ENCODE measurements at regions of chr10 and their contacts with region 1.

Region 1: GRCh38 chr10:69092959-69093850 is 5.3 kb downstream of the SRGN start:
- DNase-seq: peak; percentile 74 to 93 (median 80)
- ATAC-seq: peak; percentile 67
- H3K4me3 ChIP-seq: no peak overlapping the region
- H3K27ac ChIP-seq: peak overlapping the region; percentile 2; the same call in 1 of the 3 replicates
- H3K4me1 ChIP-seq: peaks cover 0 to 17% of the 10 kb centered on the region in 2 experiments; a peak in 2 of 5 replicates
- H3K27me3 ChIP-seq: no peaks in the 10 kb centered on the region
- CTCF ChIP-seq: peak; percentile 70 to 92 (median 80)
- EP300 ChIP-seq: no peak
- POLR2A ChIP-seq: no peak
- RAD21 ChIP-seq: peak; percentile 96 to 98

Region 2: GRCh38 chr10:68988530-68989316 is 104.5 kb before region 1 on chr10 and contains the start of gene KIFBP:
- CTCF ChIA-PET with region 1: interaction called, 4 read pairs
- POLR2A ChIA-PET with region 1: interaction called, 6 read pairs
- in situ Hi-C with region 1: no loop called
- intact Hi-C with region 1: loop called (anchors 1 kb)
- DNase-seq: peak; percentile 98 to 99 (median 99)
- ATAC-seq: peak; percentile 91
- H3K4me3 ChIP-seq: peak within 1 kb of the TSS; percentile 77
- H3K27ac ChIP-seq: peak within 1 kb of the TSS; percentile 65
- H3K4me1 ChIP-seq: peaks cover 5 to 18% of the 10 kb centered on the region in 2 experiments; a peak in 3 of 5 replicates
- H3K27me3 ChIP-seq: no peaks in the 10 kb centered on the region
- CTCF ChIP-seq: peak; percentile 85 to 97 (median 94)
- EP300 ChIP-seq: peak; percentile 48
- POLR2A ChIP-seq: peak; percentile 89
- RAD21 ChIP-seq: peak; percentile 47 to 65; a peak in 3 of 4 replicates
- polyA plus RNA-seq, gene KIFBP: 5.6 to 8.8 TPM

Region 3: DNA sequence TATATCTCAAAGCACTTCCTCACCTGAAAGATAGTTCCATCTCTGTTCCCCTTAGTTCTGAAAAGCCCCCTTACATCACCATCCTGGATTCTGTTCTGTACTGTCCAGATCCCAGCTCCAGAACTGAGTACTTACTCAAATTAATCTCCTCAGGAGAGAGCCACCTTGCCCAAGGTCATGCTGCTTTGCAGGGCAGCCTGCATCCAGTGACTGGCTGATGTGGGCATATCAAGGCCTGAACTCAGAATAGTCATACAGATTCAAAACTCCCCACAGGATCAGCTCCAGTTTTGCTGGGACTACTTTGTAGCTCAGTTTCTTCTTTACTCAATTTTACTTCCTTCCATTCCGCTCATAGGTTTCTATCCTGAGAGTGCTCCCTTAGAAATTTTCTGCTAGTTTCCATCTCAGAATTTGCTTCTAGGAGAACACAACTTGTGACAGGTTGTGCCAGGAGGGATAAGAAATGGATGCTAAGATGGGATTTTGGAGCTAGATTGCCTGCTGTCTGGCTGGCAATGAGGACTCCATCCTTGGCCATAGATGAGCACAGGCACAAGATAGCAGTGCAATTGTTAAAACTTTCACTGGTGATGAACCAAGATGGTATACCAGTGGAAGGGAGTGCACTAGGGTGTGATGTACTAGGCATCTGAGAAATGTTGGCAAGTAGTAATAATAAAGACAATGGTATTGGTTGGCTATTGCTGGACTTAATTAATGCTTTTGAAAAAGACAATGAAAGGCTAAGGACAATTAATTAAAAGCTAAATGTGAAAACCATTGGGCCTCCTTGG is 12.0 kb after region 1 on chr10:
- CTCF ChIA-PET with region 1: no interaction called
- POLR2A ChIA-PET with region 1: interaction called, 12 read pairs
- in situ Hi-C with region 1: no loop called
- intact Hi-C with region 1: no loop called
- DNase-seq: no peak
- ATAC-seq: peak; percentile 52
- H3K4me3 ChIP-seq: no peak overlapping the region
- H3K27ac ChIP-seq: no peak overlapping the region
- H3K4me1 ChIP-seq: peaks cover 0 to 4% of the 10 kb centered on the region in 2 experiments; a peak in 2 of 5 replicates
- H3K27me3 ChIP-seq: no peaks in the 10 kb centered on the region
- CTCF ChIP-seq: no peak
- EP300 ChIP-seq: no peak
- POLR2A ChIP-seq: no peak; the same call in none of the 2 replicates
- RAD21 ChIP-seq: no peak

Region 4: DNA sequence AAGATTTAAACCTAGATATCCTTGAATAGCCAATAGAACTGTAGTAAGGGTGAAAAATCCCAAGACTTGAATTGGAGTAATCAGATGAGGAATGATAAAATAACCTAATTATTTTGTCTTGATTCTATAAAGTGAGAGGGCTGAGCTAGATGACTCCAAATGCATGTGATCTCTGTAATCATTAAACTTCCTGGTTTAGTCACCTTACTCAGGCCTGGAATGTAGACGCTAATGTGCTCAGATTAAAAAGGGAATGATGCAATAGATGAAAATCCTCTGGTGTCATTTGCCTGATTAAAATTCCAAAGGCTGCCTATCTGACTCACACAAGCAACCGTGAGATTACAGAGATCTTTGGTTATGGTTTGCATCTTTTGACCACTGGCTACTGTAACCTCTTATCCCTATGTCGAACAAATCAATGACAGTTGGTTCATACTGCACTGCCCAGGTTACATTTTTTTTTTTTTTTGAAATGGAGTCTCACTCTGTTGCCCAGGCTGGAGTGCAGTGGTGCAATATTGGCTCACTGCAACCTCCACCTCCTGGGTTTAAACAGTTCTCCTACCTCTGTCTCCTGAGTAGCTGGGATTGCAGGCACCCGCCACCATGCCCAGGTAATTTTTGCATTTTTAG is 124.0 kb after region 1 on chr10:
- CTCF ChIA-PET with region 1: interaction called, 5 read pairs
- POLR2A ChIA-PET with region 1: interaction called, 3 read pairs
- in situ Hi-C with region 1: no loop called
- intact Hi-C with region 1: loop called (anchors 1 kb)
- DNase-seq: peak in 1 of 4 experiments; percentile 53
- ATAC-seq: peak; percentile 65
- H3K4me3 ChIP-seq: no peak overlapping the region
- H3K27ac ChIP-seq: no peak overlapping the region; the same call in 2 of the 3 replicates
- H3K4me1 ChIP-seq: peaks cover 6 to 39% of the 10 kb centered on the region in 2 experiments
- H3K27me3 ChIP-seq: no peaks in the 10 kb centered on the region
- CTCF ChIP-seq: no peak
- EP300 ChIP-seq: peak; percentile 94
- POLR2A ChIP-seq: no peak
- RAD21 ChIP-seq: peak in 1 of 2 experiments; percentile 27; a peak in 2 of 4 replicates

Region 5: GRCh38 chr10:69408318-69409175 is 315.3 kb after region 1 on chr10:
- CTCF ChIA-PET with region 1: interaction called, 4 read pairs
- POLR2A ChIA-PET with region 1: no interaction called
- in situ Hi-C with region 1: no loop called
- intact Hi-C with region 1: loop called (anchors 5 kb)
- DNase-seq: peak; percentile 96 to 99 (median 98)
- ATAC-seq: peak; percentile 91
- H3K4me3 ChIP-seq: peak overlapping the region; percentile 14; the same call in 1 of the 2 replicates
- H3K27ac ChIP-seq: peak overlapping the region; percentile 69; the same call in 2 of the 3 replicates
- H3K4me1 ChIP-seq: peaks cover 24 to 25% of the 10 kb centered on the region in 2 experiments
- H3K27me3 ChIP-seq: peaks cover 0 to under 1% of the 10 kb centered on the region in 2 experiments; a peak in 1 of 5 replicates
- CTCF ChIP-seq: peak; percentile 50 to 73 (median 68)
- EP300 ChIP-seq: no peak
- POLR2A ChIP-seq: peak; percentile 66
- RAD21 ChIP-seq: peak in 1 of 2 experiments; percentile 43; a peak in 2 of 4 replicates

Region 6: DNA sequence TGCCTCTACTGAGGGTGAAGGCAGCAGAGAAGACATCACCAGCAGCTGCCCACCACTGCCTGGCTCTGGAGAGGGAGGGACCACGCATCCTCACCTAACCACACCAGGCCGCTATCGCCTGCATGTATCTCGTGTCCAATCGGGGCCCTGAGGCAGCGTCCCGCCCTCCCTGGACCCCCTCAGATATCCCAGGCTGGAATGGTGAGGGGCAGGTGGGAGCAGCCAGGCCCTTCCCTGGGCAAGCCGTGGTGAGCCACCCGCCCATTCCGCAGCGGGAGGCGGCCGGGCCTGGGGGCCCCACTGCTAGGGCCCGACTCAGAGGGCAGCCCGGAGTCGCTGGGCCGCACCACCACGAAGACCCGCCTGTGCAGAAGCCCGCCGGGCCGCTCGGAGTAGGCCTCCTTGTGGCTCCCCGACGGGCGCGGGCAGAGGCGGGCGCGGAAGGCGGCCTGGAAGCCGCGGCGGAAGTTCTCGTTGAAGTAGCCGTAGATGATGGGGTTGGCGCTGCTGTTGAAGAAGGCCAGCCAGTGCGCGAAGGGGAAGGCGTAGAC is 1161.6 kb after region 1 on chr10:
- CTCF ChIA-PET with region 1: no interaction called
- POLR2A ChIA-PET with region 1: no interaction called
- in situ Hi-C with region 1: no loop called
- intact Hi-C with region 1: no loop called
- DNase-seq: no peak
- ATAC-seq: no peak
- H3K4me3 ChIP-seq: no peak overlapping the region
- H3K27ac ChIP-seq: no peak overlapping the region
- H3K4me1 ChIP-seq: peaks cover 0 to 15% of the 10 kb centered on the region in 2 experiments; a peak in 3 of 5 replicates
- H3K27me3 ChIP-seq: peaks cover 40 to 63% of the 10 kb centered on the region in 2 experiments
- CTCF ChIP-seq: no peak
- EP300 ChIP-seq: no peak
- POLR2A ChIP-seq: no peak
- RAD21 ChIP-seq: no peak

Measured in K562 (cell line).